IMR-90 (cell line): ENCODE measurements at regions of chr2 and their contacts with region 1.

Region 1: DNA sequence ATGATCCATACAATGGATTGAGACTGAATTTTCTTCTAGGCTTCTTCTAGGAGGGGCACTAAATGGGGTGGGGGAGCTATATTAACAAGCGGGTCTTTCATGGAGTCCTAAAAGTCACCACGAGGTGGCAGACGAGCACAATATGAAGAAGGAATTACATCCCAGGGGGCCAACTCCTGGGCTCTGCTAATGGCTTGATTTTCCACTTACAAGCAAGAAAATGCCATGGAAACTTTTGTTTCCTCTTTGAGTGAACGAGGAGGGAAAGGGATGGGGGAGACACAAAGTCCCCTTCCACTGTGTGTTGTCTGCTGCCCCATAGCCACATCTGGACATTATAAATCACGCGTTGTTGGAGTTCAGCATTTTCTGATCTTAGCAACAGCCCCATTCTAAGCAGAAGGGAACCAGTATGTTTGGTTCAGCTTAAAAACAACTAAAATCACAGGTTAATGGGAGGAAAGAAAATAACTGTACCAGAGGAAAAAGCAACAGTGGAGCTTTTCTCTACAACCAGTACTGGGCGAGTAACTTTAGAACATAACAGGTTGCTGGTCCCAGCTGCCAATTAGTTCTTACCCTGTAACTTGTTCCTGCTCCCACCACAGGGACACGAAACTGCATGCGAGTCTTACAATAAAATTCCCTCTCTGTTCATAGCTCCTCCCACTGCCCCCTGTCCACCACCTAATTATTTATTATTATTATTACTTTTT is 285.0 kb upstream of the PARD3B start:
- DNase-seq: peak; percentile 74
- ATAC-seq: peak; percentile 94
- H3K4me3 ChIP-seq: no peak overlapping the region
- H3K27ac ChIP-seq: no peak overlapping the region
- H3K4me1 ChIP-seq: peaks cover 3% of the 10 kb centered on the region; the same call in 1 of the 2 replicates
- H3K27me3 ChIP-seq: no peaks in the 10 kb centered on the region; the same call in none of the 2 replicates
- CTCF ChIP-seq: peak; percentile 79
- POLR2A ChIP-seq: no peak
- RAD21 ChIP-seq: peak; percentile 76

Region 2: DNA sequence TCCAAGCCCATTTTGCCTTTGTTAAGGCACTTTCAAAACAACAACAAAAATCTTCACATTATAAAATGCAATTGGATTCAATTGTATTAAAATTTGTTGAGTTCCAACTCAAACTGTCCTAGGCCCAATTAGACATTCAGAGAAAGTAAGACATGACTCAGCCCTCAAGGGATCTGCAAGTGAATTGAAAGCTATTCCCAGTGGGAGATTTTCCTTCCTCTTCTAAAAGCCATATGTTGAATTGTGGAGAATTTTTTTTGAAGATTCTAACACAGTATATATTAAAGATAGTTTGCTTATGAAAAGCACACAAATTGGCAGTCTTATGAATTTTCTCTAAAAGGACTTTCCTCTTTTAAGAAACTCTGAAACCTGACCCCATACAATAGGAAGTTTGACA is 16.9 kb after region 1 on chr2:
- CTCF ChIA-PET with region 1: no interaction called
- POLR2A ChIA-PET with region 1: no interaction called
- dilution Hi-C with region 1: no loop called
- in situ Hi-C with region 1: no loop called
- intact Hi-C with region 1: no loop called
- DNase-seq: no peak
- ATAC-seq: no peak
- H3K4me3 ChIP-seq: no peak overlapping the region
- H3K27ac ChIP-seq: no peak overlapping the region
- H3K4me1 ChIP-seq: no peaks in the 10 kb centered on the region
- H3K27me3 ChIP-seq: peaks cover 16% of the 10 kb centered on the region
- CTCF ChIP-seq: no peak
- POLR2A ChIP-seq: no peak
- RAD21 ChIP-seq: no peak

Region 3: GRCh38 chr2:204691911-204692510 is 431.7 kb after region 1 on chr2:
- CTCF ChIA-PET with region 1: no interaction called
- POLR2A ChIA-PET with region 1: no interaction called
- dilution Hi-C with region 1: no loop called
- in situ Hi-C with region 1: no loop called
- intact Hi-C with region 1: loop called (anchors 2 kb)
- DNase-seq: peak; percentile 91
- ATAC-seq: peak; percentile 74
- H3K4me3 ChIP-seq: no peak overlapping the region
- H3K27ac ChIP-seq: no peak overlapping the region
- H3K4me1 ChIP-seq: peaks cover 3% of the 10 kb centered on the region; the same call in 1 of the 2 replicates
- H3K27me3 ChIP-seq: no peaks in the 10 kb centered on the region
- CTCF ChIP-seq: peak; percentile 84
- POLR2A ChIP-seq: no peak
- RAD21 ChIP-seq: peak; percentile 92

Region 4: DNA sequence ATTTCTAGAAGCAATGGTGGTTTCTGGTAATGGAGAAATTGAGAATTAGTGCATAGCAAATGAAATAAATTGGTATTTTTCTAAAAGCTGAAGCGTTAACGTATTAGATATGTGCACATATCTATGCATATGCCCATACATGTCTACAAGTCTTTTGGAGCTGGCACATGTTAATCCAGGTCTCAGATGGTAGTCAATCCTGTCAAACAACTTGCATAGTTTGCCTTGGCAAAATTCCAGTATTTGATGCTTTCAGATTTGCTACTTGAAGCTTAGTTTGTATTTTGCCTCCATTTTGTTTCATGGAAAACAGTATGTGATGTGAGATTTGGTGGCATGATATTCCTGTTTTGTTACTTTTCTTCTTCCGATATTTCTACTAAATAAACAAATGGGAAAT is 589.6 kb after region 1 on chr2:
- CTCF ChIA-PET with region 1: no interaction called
- POLR2A ChIA-PET with region 1: no interaction called
- dilution Hi-C with region 1: no loop called
- in situ Hi-C with region 1: no loop called
- intact Hi-C with region 1: no loop called
- DNase-seq: no peak
- ATAC-seq: no peak
- H3K4me3 ChIP-seq: no peak overlapping the region
- H3K27ac ChIP-seq: no peak overlapping the region
- H3K4me1 ChIP-seq: no peaks in the 10 kb centered on the region
- H3K27me3 ChIP-seq: no peaks in the 10 kb centered on the region
- CTCF ChIP-seq: no peak
- POLR2A ChIP-seq: no peak
- RAD21 ChIP-seq: no peak

Region 5: DNA sequence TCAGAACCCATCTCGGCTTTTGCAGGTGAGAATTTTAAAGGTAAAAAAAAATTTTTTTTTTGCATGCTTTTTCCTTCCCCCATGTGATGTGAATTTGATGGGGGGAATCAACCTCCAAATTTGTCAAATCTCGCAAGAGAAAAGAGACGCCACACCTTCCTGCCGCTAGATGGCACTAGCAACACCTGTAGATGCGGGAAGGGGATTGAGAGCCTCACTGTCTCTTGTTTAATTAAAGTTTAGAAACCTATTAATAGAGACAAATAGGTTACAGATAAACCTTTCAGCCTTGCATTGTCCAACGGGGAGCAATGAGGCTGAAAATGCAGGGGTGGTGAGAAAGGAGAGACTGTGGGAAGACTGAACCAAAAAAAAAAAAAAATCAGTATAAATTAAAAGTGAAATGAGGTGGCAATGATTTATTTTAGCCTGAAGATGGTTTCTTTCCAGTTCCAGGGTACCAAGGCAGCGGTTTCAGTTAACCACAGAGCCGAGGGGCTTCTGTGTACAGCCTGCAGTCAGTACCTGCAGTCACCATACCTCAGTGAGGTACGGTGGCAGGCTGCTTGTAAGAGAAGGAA is 1506.5 kb after region 1 on chr2:
- CTCF ChIA-PET with region 1: no interaction called
- POLR2A ChIA-PET with region 1: no interaction called
- dilution Hi-C with region 1: no loop called
- in situ Hi-C with region 1: no loop called
- intact Hi-C with region 1: loop called (anchors 10 kb)
- DNase-seq: peak; percentile 72
- ATAC-seq: no peak
- H3K4me3 ChIP-seq: no peak overlapping the region
- H3K27ac ChIP-seq: no peak overlapping the region
- H3K4me1 ChIP-seq: peaks cover 33% of the 10 kb centered on the region
- H3K27me3 ChIP-seq: no peaks in the 10 kb centered on the region
- CTCF ChIP-seq: peak; percentile 85
- POLR2A ChIP-seq: no peak
- RAD21 ChIP-seq: peak; percentile 78

Region 6: DNA sequence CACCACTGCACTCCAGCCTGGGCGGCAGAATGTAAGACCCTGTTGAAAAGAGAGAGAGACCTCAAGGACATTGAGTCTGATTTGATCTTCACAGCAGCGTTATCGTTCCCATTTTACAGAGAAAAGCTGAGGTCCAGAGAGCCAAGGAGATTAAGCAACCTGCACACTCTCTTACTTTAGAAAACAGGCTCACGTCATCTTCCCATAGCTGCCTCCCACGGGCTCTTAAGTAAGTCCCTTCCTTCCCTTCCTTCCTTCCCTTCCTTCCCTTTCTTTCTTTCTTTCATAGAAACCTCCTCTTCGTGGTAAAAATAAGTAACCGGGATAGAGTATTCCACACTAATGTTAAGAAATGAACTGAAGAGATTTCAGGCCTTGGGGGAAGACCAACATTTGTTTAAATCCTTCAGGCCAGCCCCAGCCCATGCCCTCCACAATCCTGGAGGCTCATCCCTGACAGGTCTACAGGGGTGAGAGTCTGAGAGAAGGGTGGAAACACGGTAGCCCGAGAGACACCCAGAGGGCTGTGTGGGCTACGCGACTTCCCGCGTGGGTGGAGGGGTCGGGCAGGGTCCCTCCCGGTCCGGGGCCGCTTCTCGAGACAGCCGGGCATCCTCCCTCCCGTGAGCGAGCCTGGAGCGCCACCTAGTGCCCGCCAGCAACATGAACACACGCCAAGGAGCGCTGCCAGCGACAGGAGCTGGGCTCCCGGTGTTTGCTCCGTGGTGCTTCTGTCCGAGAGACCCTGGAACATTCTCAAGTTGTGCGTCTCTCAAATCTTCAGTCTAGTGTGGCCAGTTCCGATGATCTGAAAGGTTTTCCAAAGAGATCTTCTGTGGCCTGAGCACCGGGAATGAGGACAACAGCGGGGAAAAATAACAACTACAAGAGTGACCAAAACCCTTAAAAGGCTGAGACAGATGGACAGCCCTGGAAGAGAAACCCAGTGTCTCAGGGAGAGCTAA is 1665.3 kb after region 1 on chr2:
- CTCF ChIA-PET with region 1: no interaction called
- POLR2A ChIA-PET with region 1: no interaction called
- dilution Hi-C with region 1: no loop called
- in situ Hi-C with region 1: loop called (anchors 25 kb)
- intact Hi-C with region 1: loop called (anchors 2 kb)
- DNase-seq: peak; percentile 51
- ATAC-seq: peak; percentile 97
- H3K4me3 ChIP-seq: peak overlapping the region; percentile 12; the same call in 1 of the 2 replicates
- H3K27ac ChIP-seq: no peak overlapping the region
- H3K4me1 ChIP-seq: no peaks in the 10 kb centered on the region; the same call in 1 of the 2 replicates
- H3K27me3 ChIP-seq: peaks cover 42% of the 10 kb centered on the region
- CTCF ChIP-seq: peak; percentile 91
- POLR2A ChIP-seq: no peak
- RAD21 ChIP-seq: peak; percentile 93